ENCODE measurements at regions of chr2 and their contacts with region 1.

Region 1: GRCh38 chr2:151138507-151138906 is 123.2 kb downstream of the RBM43 start:
- DNase-seq: no peak

Region 2: DNA sequence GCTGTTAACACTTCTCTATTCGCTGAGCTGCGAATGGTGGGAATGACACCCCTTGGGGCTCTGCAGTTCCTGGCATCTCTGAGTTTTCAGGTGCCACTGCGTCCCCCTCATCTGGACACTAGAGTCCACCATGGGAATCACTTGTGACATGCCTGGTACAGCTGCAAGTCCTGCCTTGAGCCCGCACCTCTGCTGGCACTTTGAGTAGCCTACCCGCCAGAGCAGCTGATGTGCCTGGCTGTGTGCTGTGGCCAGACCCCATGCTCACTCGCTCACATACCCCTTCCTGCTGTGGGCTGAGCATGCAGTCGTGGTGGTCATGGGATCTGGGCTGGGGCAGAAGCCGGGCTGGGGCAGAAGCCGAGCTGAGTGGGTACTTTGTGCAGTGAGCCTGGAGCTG is 768.6 kb before region 1 on chr2:
- intact Hi-C with region 1: no loop called
- DNase-seq: peak; percentile 46

Region 3: GRCh38 chr2:151176661-151177060 is 38.2 kb after region 1 on chr2:
- intact Hi-C with region 1: loop called in 1 of 2 experiments (anchors 2 kb)
- DNase-seq: no peak

Measured in posterior vena cava (tissue), 2 donors.